ENCODE measurements at regions of chr3 and their contacts with region 1.

Region 1: DNA sequence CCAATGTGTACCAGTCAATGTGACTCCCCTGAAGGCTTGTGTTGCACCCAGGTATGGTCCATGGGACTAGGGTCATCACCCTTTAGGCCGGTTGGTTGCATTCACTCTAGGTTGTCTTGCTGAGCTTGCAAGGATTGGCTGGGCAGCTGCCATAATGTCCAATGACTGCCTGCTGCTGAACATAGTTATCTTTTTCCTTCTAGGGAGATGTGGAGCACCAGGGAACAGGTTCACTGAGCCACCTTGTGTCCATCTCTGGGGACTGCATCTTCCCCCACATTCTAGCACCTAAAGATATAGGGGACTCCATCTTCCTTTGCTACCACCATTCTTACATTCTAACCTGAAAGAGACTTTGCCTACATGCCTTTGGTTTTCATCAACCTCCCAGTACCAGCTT is 580.4 kb upstream of the TBL1XR1 start:
- DNase-seq: peak; percentile 84
- H3K4me3 ChIP-seq: no peak overlapping the region
- H3K27ac ChIP-seq: no peak overlapping the region
- H3K4me1 ChIP-seq: peaks cover 27% of the 10 kb centered on the region
- H3K27me3 ChIP-seq: no peaks in the 10 kb centered on the region
- CTCF ChIP-seq: peak; percentile 81

Region 2: DNA sequence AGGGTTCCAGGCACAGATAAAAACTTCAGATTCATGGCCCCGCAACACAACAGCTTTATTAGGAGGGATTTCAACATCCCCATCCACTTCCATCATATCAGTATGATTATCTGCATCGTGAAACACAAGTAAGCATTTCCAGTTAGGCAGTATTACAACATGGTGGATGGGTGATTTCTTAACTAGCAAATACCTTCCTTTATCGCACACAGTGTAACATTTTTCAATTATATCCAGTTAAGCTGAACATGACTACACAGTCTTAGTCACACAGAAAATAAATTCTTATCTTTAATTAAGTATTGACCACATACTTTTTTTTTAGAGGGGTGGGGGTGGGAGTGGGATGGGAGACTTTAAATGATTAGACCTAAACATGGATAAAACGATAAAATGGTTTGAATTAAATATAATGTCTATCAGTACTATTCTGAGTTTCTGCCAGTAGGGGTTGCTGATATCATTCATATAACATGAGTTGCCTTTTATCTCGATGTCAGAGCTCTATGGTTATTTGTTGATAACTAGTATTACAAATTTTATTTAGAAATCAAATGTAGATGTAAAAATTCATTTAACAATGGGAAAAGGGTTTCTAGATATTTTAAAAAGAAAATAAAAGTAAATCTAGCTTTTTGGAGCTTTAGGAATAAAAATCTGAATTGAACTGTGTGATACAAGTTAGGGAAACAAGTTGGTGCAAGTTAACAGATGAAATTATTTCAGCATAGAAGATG is 727.0 kb before region 1 on chr3:
- CTCF ChIA-PET with region 1: interaction called, 5 read pairs
- POLR2A ChIA-PET with region 1: no interaction called
- intact Hi-C with region 1: loop called (anchors 10 kb)
- DNase-seq: peak; percentile 77
- H3K4me3 ChIP-seq: no peak overlapping the region
- H3K27ac ChIP-seq: peak overlapping the region; percentile 79
- H3K4me1 ChIP-seq: peaks cover 77% of the 10 kb centered on the region
- H3K27me3 ChIP-seq: no peaks in the 10 kb centered on the region
- CTCF ChIP-seq: peak; percentile 72

Region 3: GRCh38 chr3:177448987-177449975 is 328.4 kb before region 1 on chr3:
- CTCF ChIA-PET with region 1: no interaction called
- POLR2A ChIA-PET with region 1: no interaction called
- intact Hi-C with region 1: loop called (anchors 10 kb)
- DNase-seq: peak; percentile 64
- H3K4me3 ChIP-seq: no peak overlapping the region
- H3K27ac ChIP-seq: peak overlapping the region; percentile 71
- H3K4me1 ChIP-seq: peaks cover 64% of the 10 kb centered on the region
- H3K27me3 ChIP-seq: no peaks in the 10 kb centered on the region
- CTCF ChIP-seq: no peak

Region 4: DNA sequence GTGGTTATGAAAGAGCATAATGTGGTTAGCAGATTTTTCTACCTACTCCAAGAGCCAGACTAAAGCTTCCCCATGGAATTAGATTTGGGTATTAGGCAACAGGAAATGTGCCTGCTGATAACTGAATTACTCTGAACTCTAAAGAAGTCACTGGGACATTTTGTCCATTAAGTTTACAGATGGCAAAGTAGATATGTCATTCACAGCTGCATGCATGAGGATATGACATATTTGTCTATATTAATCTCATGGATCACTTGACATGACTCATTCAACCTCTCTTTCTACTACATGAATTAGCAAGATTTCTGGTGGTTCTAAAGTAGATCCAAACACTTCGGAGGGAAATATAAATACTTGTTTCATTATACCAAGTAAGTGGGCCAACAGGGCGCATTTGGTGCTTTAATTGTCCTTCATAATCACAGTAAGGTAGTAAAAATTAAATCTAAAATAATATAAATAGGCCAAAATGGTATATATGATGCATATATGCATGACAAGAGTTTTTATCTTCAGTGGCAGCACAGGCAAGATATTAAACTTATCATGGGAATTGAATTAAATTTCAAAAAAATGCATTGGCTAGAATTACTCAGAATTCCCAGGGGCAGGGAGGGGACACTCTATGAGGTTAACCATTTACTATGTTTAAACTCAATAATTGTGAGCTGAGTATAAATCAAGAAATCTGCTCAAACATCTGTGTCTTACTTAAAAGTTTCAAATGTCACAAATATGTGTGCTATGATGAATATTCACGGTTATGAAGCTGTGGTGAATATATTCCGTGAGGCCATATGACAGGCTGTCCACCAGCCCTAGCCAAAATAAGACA is 393.2 kb after region 1 on chr3:
- CTCF ChIA-PET with region 1: no interaction called
- POLR2A ChIA-PET with region 1: no interaction called
- intact Hi-C with region 1: no loop called
- DNase-seq: peak; percentile 98
- H3K4me3 ChIP-seq: no peak overlapping the region
- H3K27ac ChIP-seq: peak overlapping the region; percentile 60
- H3K4me1 ChIP-seq: peaks cover 25% of the 10 kb centered on the region
- H3K27me3 ChIP-seq: no peaks in the 10 kb centered on the region
- CTCF ChIP-seq: no peak

Region 5: DNA sequence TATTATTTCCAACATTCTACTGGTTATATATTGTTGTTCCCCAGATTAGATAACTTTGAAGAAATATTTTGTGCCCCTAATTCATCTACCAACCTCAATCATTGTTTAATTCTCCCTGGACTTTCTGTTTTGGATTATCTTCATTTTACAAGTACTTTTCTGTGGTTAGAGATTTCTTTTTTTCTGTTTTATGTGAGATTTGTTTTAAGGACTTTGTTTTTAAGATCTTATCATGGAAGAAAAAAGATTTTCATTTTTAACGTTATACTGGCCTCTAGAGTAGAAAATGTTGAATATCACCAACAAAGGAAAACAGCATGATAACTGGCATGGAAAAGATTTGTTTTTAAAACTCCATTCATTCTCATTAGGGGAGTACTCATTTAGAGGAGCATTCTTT is 547.6 kb after region 1 on chr3:
- CTCF ChIA-PET with region 1: no interaction called
- POLR2A ChIA-PET with region 1: no interaction called
- intact Hi-C with region 1: loop called (anchors 5 kb)
- DNase-seq: peak; percentile 69
- H3K4me3 ChIP-seq: no peak overlapping the region
- H3K27ac ChIP-seq: no peak overlapping the region
- H3K4me1 ChIP-seq: peaks cover 26% of the 10 kb centered on the region
- H3K27me3 ChIP-seq: no peaks in the 10 kb centered on the region
- CTCF ChIP-seq: peak; percentile 65